Activated CD8-positive, alpha-beta T cell treated with anti-CD3 and anti-CD28 coated beads for 36 hours (primary cell): ENCODE measurements at regions of chr6 and their contacts with region 1.

Region 1: GRCh38 chr6:30828027-30828960 is 56.0 kb upstream of the DDR1 start:
- DNase-seq: peak; percentile 88
- ATAC-seq: peak; percentile 73
- H3K4me3 Mint-ChIP-seq: peak overlapping the region; percentile 84
- H3K27ac Mint-ChIP-seq: peak overlapping the region; percentile 96
- H3K4me1 Mint-ChIP-seq: peaks cover 66% of the 10 kb centered on the region
- H3K27me3 Mint-ChIP-seq: no peaks in the 10 kb centered on the region
- CTCF ChIP-seq: peak; percentile 86

Region 2: GRCh38 chr6:30711758-30712380 is 116.4 kb before region 1 on chr6:
- CTCF ChIA-PET with region 1: no interaction called
- POLR2A ChIA-PET with region 1: no interaction called
- intact Hi-C with region 1: no loop called
- DNase-seq: no peak
- ATAC-seq: peak; percentile 61
- H3K4me3 Mint-ChIP-seq: no peak overlapping the region
- H3K27ac Mint-ChIP-seq: peak overlapping the region; percentile 75
- H3K4me1 Mint-ChIP-seq: peaks cover 31% of the 10 kb centered on the region
- H3K27me3 Mint-ChIP-seq: no peaks in the 10 kb centered on the region
- CTCF ChIP-seq: no peak

Region 3: GRCh38 chr6:30742316-30743098 is 85.8 kb before region 1 on chr6 and contains the start of gene FLOT1:
- CTCF ChIA-PET with region 1: interaction called, 5 read pairs
- POLR2A ChIA-PET with region 1: interaction called, 19 read pairs
- intact Hi-C with region 1: no loop called
- DNase-seq: peak; percentile 99
- ATAC-seq: peak; percentile 77
- H3K4me3 Mint-ChIP-seq: peak within 1 kb of the TSS; percentile 99
- H3K27ac Mint-ChIP-seq: peak within 1 kb of the TSS; percentile 94
- H3K4me1 Mint-ChIP-seq: peaks cover 67% of the 10 kb centered on the region
- H3K27me3 Mint-ChIP-seq: no peaks in the 10 kb centered on the region
- CTCF ChIP-seq: no peak
- total RNA-seq, gene FLOT1: 135 TPM

Region 4: DNA sequence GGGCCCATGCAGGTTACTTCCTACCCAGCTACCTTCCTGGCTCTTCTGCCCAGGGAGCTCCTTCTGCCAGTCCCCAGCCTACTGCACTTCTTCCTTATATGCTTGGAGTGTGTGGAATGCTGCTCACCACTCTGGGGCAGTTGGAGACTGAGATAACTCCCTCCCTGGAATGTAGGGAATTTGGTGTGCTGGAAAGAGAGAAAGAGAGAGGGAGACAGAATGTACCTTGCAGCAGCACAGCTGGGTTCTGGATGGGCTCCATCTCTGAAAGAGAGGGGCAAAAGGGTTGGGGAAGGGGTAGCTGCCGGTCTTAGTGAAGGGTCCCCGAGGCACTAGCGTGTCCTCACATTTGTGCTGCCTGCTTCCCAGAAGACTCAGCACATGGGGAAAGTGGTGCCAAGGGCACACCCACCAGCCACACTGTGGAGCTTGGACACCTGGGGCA is 15.8 kb after region 1 on chr6:
- CTCF ChIA-PET with region 1: interaction called, 30 read pairs
- POLR2A ChIA-PET with region 1: interaction called, 6 read pairs
- intact Hi-C with region 1: no loop called
- DNase-seq: no peak
- ATAC-seq: no peak
- H3K4me3 Mint-ChIP-seq: peak overlapping the region; percentile 69
- H3K27ac Mint-ChIP-seq: peak overlapping the region; percentile 80
- H3K4me1 Mint-ChIP-seq: peaks cover 40% of the 10 kb centered on the region
- H3K27me3 Mint-ChIP-seq: no peaks in the 10 kb centered on the region
- CTCF ChIP-seq: no peak

Region 5: GRCh38 chr6:30877419-30878371 is 49.4 kb after region 1 on chr6:
- CTCF ChIA-PET with region 1: interaction called, 82 read pairs
- POLR2A ChIA-PET with region 1: interaction called, 7 read pairs
- intact Hi-C with region 1: loop called (anchors 2 kb)
- DNase-seq: peak; percentile 87
- ATAC-seq: peak; percentile 82
- H3K4me3 Mint-ChIP-seq: peak overlapping the region; percentile 73
- H3K27ac Mint-ChIP-seq: peak overlapping the region; percentile 92
- H3K4me1 Mint-ChIP-seq: peaks cover 41% of the 10 kb centered on the region
- H3K27me3 Mint-ChIP-seq: no peaks in the 10 kb centered on the region
- CTCF ChIP-seq: peak; percentile 93

Region 6: GRCh38 chr6:31079656-31080261 is 251.5 kb after region 1 on chr6:
- CTCF ChIA-PET with region 1: interaction called, 23 read pairs
- POLR2A ChIA-PET with region 1: no interaction called
- intact Hi-C with region 1: loop called (anchors 5 kb)
- DNase-seq: peak; percentile 84
- ATAC-seq: peak; percentile 91
- H3K4me3 Mint-ChIP-seq: peak overlapping the region; percentile 58
- H3K27ac Mint-ChIP-seq: no peak overlapping the region
- H3K4me1 Mint-ChIP-seq: peaks cover 8% of the 10 kb centered on the region
- H3K27me3 Mint-ChIP-seq: no peaks in the 10 kb centered on the region
- CTCF ChIP-seq: peak; percentile 91